Dendritic cell treated with granulocyte-macrophage colony-stimulating factor and Interleukin-4, amounts not matched to agents 40 ng/mL and 50 ng/mL, for 4 days (primary cell): ENCODE measurements at regions of chr7 and their contacts with region 1.

Region 1: GRCh38 chr7:2980401-2981102 is 63.1 kb downstream of the CARD11 start:
- H3K4me3 Mint-ChIP-seq: peak overlapping the region; percentile 37
- H3K27ac Mint-ChIP-seq: peak overlapping the region; percentile 47
- H3K4me1 Mint-ChIP-seq: peaks cover 45% of the 10 kb centered on the region
- H3K27me3 Mint-ChIP-seq: peaks cover 61% of the 10 kb centered on the region

Region 2: GRCh38 chr7:2934211-2934731 is 46.3 kb before region 1 on chr7:
- intact Hi-C with region 1: loop called (anchors 10 kb)
- H3K4me3 Mint-ChIP-seq: no peak overlapping the region
- H3K27ac Mint-ChIP-seq: no peak overlapping the region
- H3K4me1 Mint-ChIP-seq: peaks cover 20% of the 10 kb centered on the region
- H3K27me3 Mint-ChIP-seq: peaks cover 18% of the 10 kb centered on the region

Region 3: DNA sequence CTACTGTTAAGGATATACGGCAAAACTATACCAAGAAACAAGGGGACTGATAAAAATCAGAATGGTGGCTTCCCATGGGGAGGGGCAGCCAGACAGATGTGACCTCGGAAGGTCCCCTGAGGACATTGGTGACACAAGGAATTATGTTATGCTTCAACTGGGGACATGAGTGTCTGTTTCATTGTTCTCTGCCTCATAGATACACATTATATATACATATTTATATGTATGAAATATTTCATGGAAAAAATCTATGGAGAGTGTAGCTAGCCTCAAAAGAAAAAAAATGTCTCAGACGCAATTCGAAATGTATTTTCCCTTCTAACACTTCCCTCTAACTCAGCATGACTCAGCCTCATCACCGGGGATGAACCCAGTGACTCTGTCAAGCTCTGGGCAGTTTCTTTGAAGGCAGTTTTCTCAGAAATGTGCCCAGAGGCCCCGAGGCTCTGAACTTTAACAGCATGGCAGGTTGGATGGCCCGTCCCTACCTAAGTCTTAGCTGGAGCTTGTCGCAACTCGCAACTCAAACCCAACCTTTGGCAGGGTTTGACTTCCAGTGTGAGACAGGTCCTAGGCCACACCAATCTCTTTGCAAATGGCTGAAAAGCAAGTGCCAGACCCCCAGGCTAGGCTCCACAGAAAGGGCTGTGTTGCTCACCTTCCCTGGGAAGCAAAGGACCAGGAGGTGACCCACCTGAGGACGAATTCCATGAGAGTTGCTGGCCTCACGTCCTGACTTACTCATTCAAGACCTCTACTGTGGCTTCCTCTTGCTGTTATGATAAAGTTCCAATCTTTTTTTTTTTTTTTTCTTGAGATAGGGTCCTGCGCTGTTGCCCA is 23.8 kb before region 1 on chr7:
- intact Hi-C with region 1: no loop called
- H3K4me3 Mint-ChIP-seq: peak overlapping the region; percentile 9
- H3K27ac Mint-ChIP-seq: peak overlapping the region; percentile 72
- H3K4me1 Mint-ChIP-seq: peaks cover 70% of the 10 kb centered on the region
- H3K27me3 Mint-ChIP-seq: peaks cover 10% of the 10 kb centered on the region

Region 4: GRCh38 chr7:2996141-2996540 is 15.6 kb after region 1 on chr7:
- intact Hi-C with region 1: no loop called
- H3K4me3 Mint-ChIP-seq: no peak overlapping the region
- H3K27ac Mint-ChIP-seq: no peak overlapping the region
- H3K4me1 Mint-ChIP-seq: peaks cover 7% of the 10 kb centered on the region
- H3K27me3 Mint-ChIP-seq: peaks cover 4% of the 10 kb centered on the region